ENCODE measurements at regions of chr5 and their contacts with region 1.

Region 1: DNA sequence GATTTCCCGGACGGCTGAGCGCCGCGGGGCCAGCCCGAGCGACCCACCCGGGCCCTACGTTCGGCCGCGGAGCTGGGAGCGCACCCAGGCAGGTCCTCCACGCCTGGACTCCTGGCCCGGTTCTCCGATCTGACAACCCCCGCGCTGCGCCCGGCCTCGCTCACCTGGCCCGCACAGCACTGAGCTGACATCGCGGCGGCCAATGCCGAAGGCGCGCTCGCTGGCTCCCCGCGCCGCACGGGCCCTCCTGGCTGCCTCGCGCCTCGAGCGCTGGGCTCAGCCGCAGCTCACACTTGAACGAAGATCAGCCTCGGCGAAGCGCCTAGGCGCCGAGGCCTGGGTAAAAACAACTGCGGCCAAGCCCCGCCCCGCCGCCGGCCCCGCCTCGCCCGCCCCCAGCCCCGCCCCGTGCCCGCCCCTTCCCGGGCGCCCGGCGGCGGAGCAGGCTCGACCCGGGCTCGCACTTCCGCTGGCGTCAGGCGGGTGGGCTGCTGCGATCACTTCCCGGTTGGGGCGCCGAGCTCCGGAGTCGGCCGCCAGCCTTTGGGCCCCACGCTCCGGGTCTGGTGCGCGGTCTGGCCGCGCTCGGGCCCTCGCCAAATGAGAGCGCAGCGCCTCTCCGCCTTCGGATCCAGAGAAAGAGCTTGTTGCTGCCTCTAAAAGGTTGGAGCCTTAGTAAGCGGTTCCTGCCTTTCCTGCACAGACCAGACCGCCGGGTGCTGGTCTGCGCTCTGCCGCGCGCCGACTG is at the start of gene SERINC5:
- DNase-seq: peak; percentile 96
- total RNA-seq, gene SERINC5: 13.5 to 14.7 TPM

Region 2: GRCh38 chr5:80191991-80192398 is 63.9 kb before region 1 on chr5:
- intact Hi-C with region 1: loop called in 1 of 2 experiments (anchors 10 kb)
- DNase-seq: no peak

Measured in posterior vena cava (tissue), 2 donors.